Mammary epithelial cell (primary cell): ENCODE measurements at regions of chr1 and their contacts with region 1.

Region 1: DNA sequence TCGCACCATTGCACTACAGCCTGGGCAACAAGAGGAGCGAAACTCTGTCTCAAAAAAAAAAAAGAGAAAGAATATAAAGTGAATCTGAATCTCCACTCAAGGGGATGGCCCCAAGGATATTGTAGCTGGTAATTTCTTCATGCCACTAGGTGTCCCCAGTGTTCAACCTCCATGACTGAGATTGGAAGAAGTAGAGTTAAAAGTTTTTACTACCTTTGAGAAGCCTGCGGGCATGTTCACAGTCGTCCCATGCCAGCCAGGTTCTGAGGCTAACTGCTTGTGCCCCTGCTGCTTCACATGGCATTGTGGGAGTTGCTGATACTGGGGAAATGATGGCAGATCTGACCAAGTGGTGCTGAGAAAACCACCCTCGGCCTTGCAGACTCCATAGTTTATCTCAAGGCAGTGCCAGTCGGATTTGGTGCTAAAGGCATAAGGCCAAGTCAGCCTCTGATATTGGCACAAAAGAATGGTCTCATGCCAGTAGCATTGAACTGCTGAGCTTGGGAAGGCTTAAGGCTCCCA is 10.8 kb upstream of the SHISA4 start:
- DNase-seq: peak; percentile 58
- H3K4me3 ChIP-seq: no peak overlapping the region
- H3K27ac ChIP-seq: no peak overlapping the region
- H3K4me1 ChIP-seq: peaks cover 12% of the 10 kb centered on the region
- H3K27me3 ChIP-seq: no peaks in the 10 kb centered on the region
- CTCF ChIP-seq: peak; percentile 68 to 73

Region 2: DNA sequence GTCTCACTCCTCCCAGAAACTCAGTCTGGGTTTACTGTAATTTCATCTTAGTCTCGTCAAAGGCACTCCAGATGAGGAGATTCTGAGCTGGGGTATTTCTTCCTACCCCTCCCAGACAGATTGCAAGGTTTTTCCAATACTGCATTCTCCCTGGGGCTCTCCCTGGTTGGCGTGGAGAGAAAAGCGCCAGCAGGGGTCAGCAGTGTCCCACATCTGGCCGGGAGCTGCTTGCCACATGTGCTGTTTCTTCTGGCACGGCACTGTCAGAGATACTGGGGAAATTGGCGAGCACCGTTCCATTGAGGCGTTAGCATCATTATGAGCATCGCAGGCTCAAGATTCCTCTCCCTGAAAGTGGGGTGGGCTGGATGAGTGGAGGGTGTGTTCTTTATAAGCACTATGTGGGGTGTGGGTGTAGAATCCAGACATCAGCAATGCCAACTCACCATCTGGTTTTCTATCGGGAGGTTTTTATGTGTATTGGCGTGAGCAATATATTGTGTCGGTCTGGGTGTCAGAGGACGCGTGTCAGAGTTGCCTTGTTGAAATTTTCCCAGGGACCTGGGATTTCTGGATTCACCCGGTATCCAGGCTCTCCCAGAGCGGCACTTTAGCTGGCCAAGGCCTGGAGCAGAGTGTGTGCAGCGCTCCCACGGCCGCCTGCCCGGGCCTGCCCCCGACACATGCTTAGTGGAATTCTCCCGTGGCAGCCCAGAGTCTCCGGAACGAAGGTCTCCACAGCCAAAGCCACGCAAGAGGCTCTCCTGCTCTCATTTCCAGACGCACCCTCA is 347.0 kb before region 1 on chr1:
- CTCF ChIA-PET with region 1: no interaction called
- dilution Hi-C with region 1: no loop called
- in situ Hi-C with region 1: no loop called
- intact Hi-C with region 1: loop called (anchors 5 kb)
- DNase-seq: peak; percentile 70
- H3K4me3 ChIP-seq: no peak overlapping the region
- H3K27ac ChIP-seq: no peak overlapping the region
- H3K4me1 ChIP-seq: peaks cover 15% of the 10 kb centered on the region
- H3K27me3 ChIP-seq: no peaks in the 10 kb centered on the region
- CTCF ChIP-seq: peak; percentile 86 to 88

Region 3: GRCh38 chr1:201828820-201829774 is 48.8 kb before region 1 on chr1 and contains the start of gene IPO9:
- CTCF ChIA-PET with region 1: no interaction called
- dilution Hi-C with region 1: no loop called
- in situ Hi-C with region 1: no loop called
- intact Hi-C with region 1: loop called (anchors 5 kb)
- DNase-seq: peak; percentile 90
- H3K4me3 ChIP-seq: peak within 1 kb of the TSS; percentile 74 to 90 (median 79)
- H3K27ac ChIP-seq: peak within 1 kb of the TSS; percentile 67
- H3K4me1 ChIP-seq: peaks cover 8% of the 10 kb centered on the region
- H3K27me3 ChIP-seq: no peaks in the 10 kb centered on the region
- CTCF ChIP-seq: peak; percentile 84 to 88
- total RNA-seq, gene IPO9: 22.7 to 61.3 TPM

Region 4: DNA sequence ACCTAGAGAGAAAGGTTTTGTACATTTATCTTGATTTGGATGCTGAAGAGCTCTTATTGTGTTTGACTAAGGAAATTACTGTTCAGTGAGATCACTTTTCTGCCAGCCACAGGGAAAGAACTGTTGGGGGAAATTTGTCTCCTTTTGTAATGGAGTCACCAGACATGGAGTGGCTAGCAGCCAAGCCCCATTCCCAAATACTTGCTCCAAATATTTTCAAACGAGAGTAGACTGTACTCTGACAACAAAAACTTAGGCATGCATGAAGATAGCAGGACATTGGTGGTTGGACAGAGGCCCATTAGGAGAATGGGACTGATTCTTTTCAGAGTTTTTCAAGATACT is 27.9 kb before region 1 on chr1:
- CTCF ChIA-PET with region 1: no interaction called
- dilution Hi-C with region 1: no loop called
- in situ Hi-C with region 1: no loop called
- intact Hi-C with region 1: no loop called
- DNase-seq: peak; percentile 75
- H3K4me3 ChIP-seq: no peak overlapping the region
- H3K27ac ChIP-seq: peak overlapping the region; percentile 66
- H3K4me1 ChIP-seq: peaks cover 29% of the 10 kb centered on the region
- H3K27me3 ChIP-seq: no peaks in the 10 kb centered on the region
- CTCF ChIP-seq: no peak

Region 5: GRCh38 chr1:201895913-201896807 is 18.2 kb after region 1 on chr1:
- CTCF ChIA-PET with region 1: interaction called, 11 read pairs
- dilution Hi-C with region 1: no loop called
- in situ Hi-C with region 1: no loop called
- intact Hi-C with region 1: loop called (anchors 1 kb)
- DNase-seq: peak; percentile 78
- H3K4me3 ChIP-seq: no peak overlapping the region
- H3K27ac ChIP-seq: no peak overlapping the region
- H3K4me1 ChIP-seq: peaks cover 21% of the 10 kb centered on the region
- H3K27me3 ChIP-seq: no peaks in the 10 kb centered on the region
- CTCF ChIP-seq: peak; percentile 89 to 98

Region 6: GRCh38 chr1:201916649-201917249 is 38.8 kb after region 1 on chr1:
- CTCF ChIA-PET with region 1: no interaction called
- dilution Hi-C with region 1: no loop called
- in situ Hi-C with region 1: no loop called
- intact Hi-C with region 1: no loop called
- DNase-seq: peak; percentile 61
- H3K4me3 ChIP-seq: no peak overlapping the region
- H3K27ac ChIP-seq: no peak overlapping the region
- H3K4me1 ChIP-seq: peaks cover 16% of the 10 kb centered on the region
- H3K27me3 ChIP-seq: no peaks in the 10 kb centered on the region
- CTCF ChIP-seq: no peak

Region 7: GRCh38 chr1:202018468-202019255 is 140.7 kb after region 1 on chr1:
- CTCF ChIA-PET with region 1: interaction called, 18 read pairs
- dilution Hi-C with region 1: no loop called
- in situ Hi-C with region 1: no loop called
- intact Hi-C with region 1: no loop called
- DNase-seq: peak; percentile 84
- H3K4me3 ChIP-seq: no peak overlapping the region
- H3K27ac ChIP-seq: peak overlapping the region; percentile 22
- H3K4me1 ChIP-seq: peaks cover 44% of the 10 kb centered on the region
- H3K27me3 ChIP-seq: no peaks in the 10 kb centered on the region
- CTCF ChIP-seq: no peak

Region 8: GRCh38 chr1:202063100-202063499 is 185.2 kb after region 1 on chr1:
- CTCF ChIA-PET with region 1: no interaction called
- dilution Hi-C with region 1: no loop called
- in situ Hi-C with region 1: no loop called
- intact Hi-C with region 1: no loop called
- DNase-seq: no peak
- H3K4me3 ChIP-seq: no peak overlapping the region
- H3K27ac ChIP-seq: no peak overlapping the region
- H3K4me1 ChIP-seq: peaks cover 8% of the 10 kb centered on the region
- H3K27me3 ChIP-seq: no peaks in the 10 kb centered on the region
- CTCF ChIP-seq: no peak

Region 9: DNA sequence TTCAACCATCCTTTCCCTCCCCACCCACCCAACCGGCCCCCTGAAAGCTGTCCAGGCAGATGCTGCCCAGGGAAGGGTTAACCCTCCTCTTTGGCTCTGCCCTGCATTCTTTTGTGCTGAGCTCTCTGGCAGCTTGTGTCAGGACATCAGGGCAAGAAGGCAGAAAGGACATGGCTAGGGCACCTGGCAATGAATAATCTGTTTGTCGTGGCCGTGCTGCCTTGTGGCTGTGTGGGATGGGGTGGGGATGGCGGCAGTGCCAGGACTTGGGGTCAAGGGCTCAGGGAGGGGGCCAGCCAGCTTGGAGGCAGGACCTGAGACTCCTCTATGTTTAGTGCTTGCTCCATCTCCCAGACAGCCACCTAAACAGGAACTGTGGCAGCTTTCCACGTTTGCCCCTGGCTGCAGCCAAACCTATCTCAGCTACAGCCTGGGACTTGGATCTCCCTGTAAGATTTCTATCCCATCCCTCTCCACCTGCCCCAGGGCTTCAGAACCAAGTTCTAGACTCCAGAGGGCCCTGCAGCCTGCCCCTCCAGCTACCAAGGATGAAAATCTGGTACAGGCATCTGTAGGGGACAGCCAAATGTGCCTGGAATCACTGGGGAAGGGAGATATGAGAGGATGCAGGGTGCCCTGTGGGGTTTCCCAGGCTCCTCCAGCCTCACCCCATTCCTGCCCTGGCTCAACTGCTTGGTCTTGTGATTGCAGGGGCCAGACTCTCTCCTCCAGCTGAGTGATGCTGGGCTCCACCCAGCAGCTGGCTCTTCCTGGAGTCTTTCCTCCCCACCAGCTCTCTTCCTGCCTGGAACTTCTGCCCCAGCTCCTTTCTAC is 235.1 kb after region 1 on chr1:
- CTCF ChIA-PET with region 1: no interaction called
- dilution Hi-C with region 1: no loop called
- in situ Hi-C with region 1: no loop called
- intact Hi-C with region 1: loop called (anchors 2 kb)
- DNase-seq: peak; percentile 64
- H3K4me3 ChIP-seq: no peak overlapping the region
- H3K27ac ChIP-seq: peak overlapping the region; percentile 32
- H3K4me1 ChIP-seq: peaks cover 20% of the 10 kb centered on the region
- H3K27me3 ChIP-seq: no peaks in the 10 kb centered on the region
- CTCF ChIP-seq: no peak

Region 10: GRCh38 chr1:202135221-202135721 is 257.3 kb after region 1 on chr1:
- CTCF ChIA-PET with region 1: no interaction called
- dilution Hi-C with region 1: no loop called
- in situ Hi-C with region 1: loop called in 1 of 2 experiments (anchors 10 kb)
- intact Hi-C with region 1: no loop called
- DNase-seq: peak; percentile 39
- H3K4me3 ChIP-seq: no peak overlapping the region
- H3K27ac ChIP-seq: no peak overlapping the region
- H3K4me1 ChIP-seq: peaks cover 16% of the 10 kb centered on the region
- H3K27me3 ChIP-seq: no peaks in the 10 kb centered on the region
- CTCF ChIP-seq: peak; percentile 83 to 89